Activated CD4-positive, alpha-beta memory T cell treated with anti-CD3 and anti-CD28 coated beads for 36 hours (primary cell): ENCODE measurements at regions of chr4 and their contacts with region 1.

Region 1: DNA sequence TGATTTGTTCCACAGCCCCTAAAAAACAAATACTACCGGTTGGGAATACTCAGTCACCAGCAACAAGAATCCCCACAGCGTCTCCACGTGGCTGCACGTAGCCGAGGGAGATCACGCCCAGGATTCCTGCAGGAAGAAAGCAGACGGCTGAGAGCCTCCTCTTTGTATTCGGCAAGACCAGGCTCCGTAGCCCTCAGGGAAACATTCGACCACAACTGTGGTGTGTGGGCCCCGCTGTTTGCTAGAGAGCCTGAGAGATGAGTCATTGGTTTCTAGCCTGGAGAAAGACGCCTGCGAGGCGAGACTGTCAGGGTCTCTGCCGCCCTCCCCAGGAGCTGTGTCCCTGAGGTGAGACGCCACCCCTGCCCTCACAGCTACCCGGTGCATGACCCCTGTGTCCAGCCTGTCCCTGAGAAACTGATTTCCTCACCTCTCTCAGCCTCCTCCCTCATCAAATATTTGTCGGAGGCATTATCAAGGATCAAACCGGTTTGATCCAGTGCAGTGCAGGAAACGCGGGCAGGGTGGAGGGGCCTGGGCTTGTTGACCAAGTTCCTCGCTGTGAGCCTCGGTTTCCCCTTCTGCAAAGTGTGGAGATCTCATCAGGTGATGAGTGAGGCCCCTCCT is 4.7 kb upstream of the S100P start:
- DNase-seq: peak; percentile 92
- H3K4me3 Mint-ChIP-seq: peak overlapping the region; percentile 74
- H3K27ac Mint-ChIP-seq: peak overlapping the region; percentile 89
- H3K4me1 Mint-ChIP-seq: peaks cover 77% of the 10 kb centered on the region
- H3K27me3 Mint-ChIP-seq: no peaks in the 10 kb centered on the region

Region 2: GRCh38 chr4:6701371-6701770 is 12.4 kb after region 1 on chr4:
- CTCF ChIA-PET with region 1: interaction called, 32 read pairs
- POLR2A ChIA-PET with region 1: interaction called, 6 read pairs
- intact Hi-C with region 1: no loop called
- DNase-seq: peak; percentile 70
- H3K4me3 Mint-ChIP-seq: no peak overlapping the region
- H3K27ac Mint-ChIP-seq: no peak overlapping the region
- H3K4me1 Mint-ChIP-seq: peaks cover 73% of the 10 kb centered on the region
- H3K27me3 Mint-ChIP-seq: no peaks in the 10 kb centered on the region

Region 3: DNA sequence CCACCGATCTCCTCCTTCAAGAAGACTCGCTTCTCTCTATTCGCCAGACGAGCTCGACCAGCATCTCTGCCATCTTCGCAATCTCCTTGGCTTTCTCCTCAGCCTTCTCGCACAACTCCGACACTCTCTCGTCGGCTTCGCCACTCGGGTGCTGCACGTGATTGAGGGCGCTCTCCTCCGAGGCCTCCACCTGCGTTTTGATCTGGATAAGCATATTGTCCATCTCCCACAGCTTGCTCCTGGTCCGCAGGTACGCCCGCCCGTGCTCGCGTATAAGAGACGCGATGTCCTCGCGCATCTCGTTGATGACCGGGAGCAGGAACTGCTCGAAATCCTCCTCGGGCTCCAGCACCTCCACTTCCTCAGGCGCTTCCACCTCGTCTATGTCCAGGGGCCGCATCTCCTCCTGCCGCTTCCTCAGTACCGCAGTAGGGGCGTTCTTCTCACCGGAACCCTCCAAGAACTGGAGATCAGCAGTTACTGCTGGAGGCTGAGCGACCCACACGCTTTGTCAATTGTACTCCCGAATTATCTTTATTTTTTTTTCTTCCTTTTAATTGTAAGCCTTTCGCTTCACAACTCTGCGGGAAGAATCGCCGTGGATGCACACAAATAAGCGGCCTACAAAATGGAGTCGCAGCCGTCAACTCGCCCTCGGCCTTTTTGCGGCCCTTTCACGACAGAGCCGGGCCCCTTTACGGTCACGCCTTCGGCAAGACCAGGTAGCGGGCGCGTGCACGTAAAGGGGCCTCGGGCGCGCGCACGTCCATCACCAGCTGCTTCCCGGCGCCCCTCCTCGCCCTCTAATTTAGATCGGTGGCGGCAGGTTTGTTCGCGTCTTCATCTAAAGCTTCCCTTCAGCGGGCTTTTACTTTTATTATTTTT is 20.5 kb after region 1 on chr4 and contains the start of gene MRFAP1L1:
- CTCF ChIA-PET with region 1: interaction called, 22 read pairs
- POLR2A ChIA-PET with region 1: interaction called, 8 read pairs
- intact Hi-C with region 1: loop called (anchors 1 kb)
- DNase-seq: peak; percentile 98
- H3K4me3 Mint-ChIP-seq: peak within 1 kb of the TSS; percentile 99
- H3K27ac Mint-ChIP-seq: peak within 1 kb of the TSS; percentile 95
- H3K4me1 Mint-ChIP-seq: peaks cover 49% of the 10 kb centered on the region
- H3K27me3 Mint-ChIP-seq: no peaks in the 10 kb centered on the region
- total RNA-seq, gene MRFAP1L1: 50.7 to 52.0 TPM